ENCODE measurements at regions of chr11 and their contacts with region 1.

Region 1: GRCh38 chr11:96242971-96243647 is 99.9 kb downstream of the MAML2 start:
- DNase-seq: peak; percentile 94
- H3K4me3 Mint-ChIP-seq: peak overlapping the region; percentile 84
- H3K27ac Mint-ChIP-seq: peak overlapping the region; percentile 95
- H3K4me1 Mint-ChIP-seq: peaks cover 54% of the 10 kb centered on the region
- H3K27me3 Mint-ChIP-seq: no peaks in the 10 kb centered on the region

Region 2: GRCh38 chr11:95923728-95924413 is 319.2 kb before region 1 on chr11 and contains the start of gene MTMR2:
- CTCF ChIA-PET with region 1: no interaction called
- intact Hi-C with region 1: loop called (anchors 10 kb)
- DNase-seq: peak; percentile 62
- H3K4me3 Mint-ChIP-seq: peak within 1 kb of the TSS; percentile 94
- H3K27ac Mint-ChIP-seq: peak within 1 kb of the TSS; percentile 95
- H3K4me1 Mint-ChIP-seq: peaks cover 28% of the 10 kb centered on the region
- H3K27me3 Mint-ChIP-seq: no peaks in the 10 kb centered on the region
- total RNA-seq, gene MTMR2: 32.5 to 34.6 TPM

Region 3: GRCh38 chr11:96091476-96091875 is 151.6 kb before region 1 on chr11:
- CTCF ChIA-PET with region 1: no interaction called
- intact Hi-C with region 1: no loop called
- DNase-seq: peak; percentile 26
- H3K4me3 Mint-ChIP-seq: no peak overlapping the region
- H3K27ac Mint-ChIP-seq: no peak overlapping the region
- H3K4me1 Mint-ChIP-seq: peaks cover 56% of the 10 kb centered on the region
- H3K27me3 Mint-ChIP-seq: no peaks in the 10 kb centered on the region

Region 4: DNA sequence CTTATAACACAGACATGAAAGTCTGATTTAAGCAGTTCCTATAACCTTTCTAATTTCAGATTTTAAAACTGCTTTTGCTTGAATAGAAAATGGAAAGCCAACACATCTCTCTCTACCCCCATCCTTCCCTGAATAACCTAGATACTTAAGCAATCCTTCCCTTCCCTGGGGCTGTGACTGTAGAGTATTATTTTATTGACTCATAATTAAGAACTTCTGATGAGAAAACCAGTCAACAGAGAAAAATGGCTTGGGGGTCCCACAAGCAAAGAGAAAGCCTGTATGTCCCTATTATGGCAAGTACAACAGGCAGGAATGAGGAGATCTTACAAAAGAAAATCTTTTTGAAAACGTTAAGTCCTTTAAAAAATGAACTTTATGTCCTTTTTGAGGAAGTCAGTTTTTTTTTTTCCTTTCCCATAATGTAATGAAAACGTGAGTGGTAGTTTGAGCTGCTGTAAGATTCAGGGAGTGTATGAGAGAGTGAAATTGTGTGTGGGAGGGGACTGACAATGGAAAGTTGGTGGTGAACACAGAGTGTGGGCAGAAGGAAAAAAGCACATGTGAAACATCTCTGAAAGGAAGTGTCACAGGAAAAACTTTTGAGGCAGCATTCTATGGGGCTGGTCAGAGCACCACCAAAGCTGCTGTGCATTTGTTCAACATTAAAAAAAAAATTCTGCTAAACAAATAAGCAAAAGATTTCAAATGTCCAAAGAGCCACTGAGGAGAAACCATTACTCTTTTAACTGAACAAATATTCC is 54.7 kb before region 1 on chr11:
- CTCF ChIA-PET with region 1: interaction called, 4 read pairs
- intact Hi-C with region 1: loop called (anchors 1 kb)
- DNase-seq: peak; percentile 49
- H3K4me3 Mint-ChIP-seq: peak overlapping the region; percentile 38
- H3K27ac Mint-ChIP-seq: peak overlapping the region; percentile 92
- H3K4me1 Mint-ChIP-seq: peaks cover 90% of the 10 kb centered on the region
- H3K27me3 Mint-ChIP-seq: no peaks in the 10 kb centered on the region

Region 5: DNA sequence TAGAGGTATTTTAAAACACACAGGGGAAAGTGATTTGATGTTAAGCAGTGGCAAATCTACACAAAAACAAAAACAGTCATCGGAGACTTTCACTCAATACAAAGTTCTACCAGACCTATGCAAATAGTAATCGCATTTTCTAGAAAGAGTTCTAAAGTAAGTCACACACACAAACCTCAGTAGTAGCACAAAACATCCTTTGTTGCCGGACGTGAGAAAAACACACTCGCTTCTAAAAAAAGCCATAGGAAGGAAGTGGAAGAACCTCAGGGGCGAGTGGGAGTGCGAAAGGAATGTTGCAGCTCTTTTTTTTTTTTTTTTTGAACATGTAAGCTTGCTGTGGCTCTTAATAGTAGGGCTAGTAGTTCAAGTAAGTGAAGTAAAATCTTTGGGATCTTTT is 11.0 kb after region 1 on chr11:
- CTCF ChIA-PET with region 1: interaction called, 4 read pairs
- intact Hi-C with region 1: loop called (anchors 1 kb)
- DNase-seq: peak; percentile 49
- H3K4me3 Mint-ChIP-seq: peak overlapping the region; percentile 58
- H3K27ac Mint-ChIP-seq: peak overlapping the region; percentile 77
- H3K4me1 Mint-ChIP-seq: peaks cover 89% of the 10 kb centered on the region
- H3K27me3 Mint-ChIP-seq: no peaks in the 10 kb centered on the region

Region 6: GRCh38 chr11:96279018-96279895 is 36.1 kb after region 1 on chr11:
- CTCF ChIA-PET with region 1: interaction called, 3 read pairs
- intact Hi-C with region 1: loop called (anchors 1 kb)
- DNase-seq: no peak
- H3K4me3 Mint-ChIP-seq: no peak overlapping the region
- H3K27ac Mint-ChIP-seq: peak overlapping the region; percentile 16
- H3K4me1 Mint-ChIP-seq: peaks cover 68% of the 10 kb centered on the region
- H3K27me3 Mint-ChIP-seq: no peaks in the 10 kb centered on the region